Body of pancreas (tissue), 4 donors: ENCODE measurements at regions of chr14 and their contacts with region 1.

Region 1: DNA sequence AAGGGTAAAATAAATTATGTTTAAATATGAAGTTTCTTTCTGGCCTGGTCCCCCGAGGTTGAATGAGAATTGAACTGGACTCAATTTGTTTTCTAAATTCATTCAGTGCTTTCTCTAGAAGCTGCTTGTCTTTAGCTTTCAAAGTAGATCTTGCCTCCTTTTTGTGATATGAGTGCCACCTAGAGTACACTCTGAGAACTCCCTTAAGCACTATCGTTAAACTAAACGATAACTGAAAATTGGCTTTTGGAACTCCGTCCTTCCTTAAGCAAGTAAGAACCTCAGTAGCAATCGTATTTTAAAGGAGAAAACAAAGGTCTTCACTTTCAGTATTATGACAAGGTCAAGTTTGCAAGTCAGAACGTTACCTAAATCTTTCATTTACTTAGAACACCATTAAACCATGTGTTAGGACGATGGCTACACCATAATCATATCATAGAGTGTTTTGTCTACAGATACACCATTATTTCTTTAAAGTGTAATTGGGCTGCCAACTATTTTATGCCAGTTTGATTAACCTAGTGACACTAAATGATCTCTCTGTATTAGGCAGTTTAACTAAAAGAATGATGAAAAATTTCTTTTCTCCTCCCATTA is 364.8 kb downstream of the SNAPC1 start:
- DNase-seq: peak in 1 of 4 donors; percentile 22
- ATAC-seq: peak; percentile 86
- H3K4me3 ChIP-seq: no peak overlapping the region
- H3K27ac ChIP-seq: no peak overlapping the region
- H3K4me1 ChIP-seq: no peaks in the 10 kb centered on the region
- H3K27me3 ChIP-seq: no peaks in the 10 kb centered on the region
- CTCF ChIP-seq: peak; percentile 41 to 86 (median 81)
- POLR2A ChIP-seq: no peak

Region 2: GRCh38 chr14:61894452-61895077 is 232.4 kb before region 1 on chr14:
- intact Hi-C with region 1: loop called (anchors 10 kb)
- DNase-seq: peak; percentile 68 to 82 (median 75)
- ATAC-seq: no peak
- H3K4me3 ChIP-seq: no peak overlapping the region
- H3K27ac ChIP-seq: no peak overlapping the region
- H3K4me1 ChIP-seq: no peaks in the 10 kb centered on the region
- H3K27me3 ChIP-seq: no peaks in the 10 kb centered on the region
- CTCF ChIP-seq: peak; percentile 48 to 75 (median 63)
- POLR2A ChIP-seq: no peak

Region 3: DNA sequence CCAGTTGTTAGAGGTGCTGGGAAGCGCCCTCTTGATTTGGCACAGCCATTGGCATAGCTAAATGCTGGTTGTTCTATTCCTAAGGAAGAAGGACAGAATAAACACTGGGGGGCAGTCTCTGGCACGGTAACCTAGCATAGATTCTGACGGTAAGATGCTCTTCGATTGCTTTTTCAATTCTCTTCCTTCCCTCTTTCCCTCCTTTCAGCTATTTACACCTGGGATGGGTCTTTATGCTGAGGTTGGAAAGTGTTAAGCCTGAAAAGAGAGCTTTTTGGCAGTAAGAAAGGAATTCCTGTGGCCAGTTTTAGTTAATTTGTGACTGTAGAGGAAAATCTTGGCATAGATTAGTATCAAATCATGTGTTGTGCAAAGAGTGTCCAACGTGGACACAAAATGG is 201.9 kb before region 1 on chr14:
- intact Hi-C with region 1: no loop called
- DNase-seq: peak in 2 of 4 donors; percentile 19 to 39
- ATAC-seq: peak; percentile 43
- H3K4me3 ChIP-seq: no peak overlapping the region
- H3K27ac ChIP-seq: no peak overlapping the region
- H3K4me1 ChIP-seq: peaks cover 15% of the 10 kb centered on the region
- H3K27me3 ChIP-seq: no peaks in the 10 kb centered on the region
- CTCF ChIP-seq: peak in 2 of 7 experiments; percentile 12 to 43
- POLR2A ChIP-seq: no peak